Heart left ventricle (tissue), 16 donors: ENCODE measurements at regions of chr9 and their contacts with region 1.

Region 1: DNA sequence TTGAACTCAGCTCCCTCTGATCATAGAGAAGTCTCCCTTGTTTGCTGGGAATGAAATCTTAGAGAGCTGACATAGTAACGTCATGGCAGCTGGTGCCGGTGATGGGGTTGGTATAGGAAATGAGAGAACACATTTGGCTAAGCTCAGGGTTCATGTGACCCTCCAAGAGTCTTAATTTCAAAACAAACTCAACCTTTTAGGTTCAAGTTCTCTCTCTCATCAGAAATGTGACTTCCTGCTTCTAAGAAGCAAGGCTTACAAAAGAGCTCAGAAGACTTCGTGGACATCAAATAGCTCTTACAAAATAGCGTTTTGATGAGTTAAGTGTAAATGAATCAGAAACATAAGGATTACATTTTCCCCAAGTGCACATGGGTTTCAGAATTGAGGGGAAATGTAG is 97.3 kb downstream of the PAPPA start:
- DNase-seq: no peak
- ATAC-seq: no peak
- H3K4me3 ChIP-seq: no peak overlapping the region
- H3K27ac ChIP-seq: no peak overlapping the region
- H3K4me1 ChIP-seq: no peaks in the 10 kb centered on the region
- H3K27me3 ChIP-seq: no peaks in the 10 kb centered on the region
- CTCF ChIP-seq: no peak
- POLR2A ChIP-seq: no peak

Region 2: DNA sequence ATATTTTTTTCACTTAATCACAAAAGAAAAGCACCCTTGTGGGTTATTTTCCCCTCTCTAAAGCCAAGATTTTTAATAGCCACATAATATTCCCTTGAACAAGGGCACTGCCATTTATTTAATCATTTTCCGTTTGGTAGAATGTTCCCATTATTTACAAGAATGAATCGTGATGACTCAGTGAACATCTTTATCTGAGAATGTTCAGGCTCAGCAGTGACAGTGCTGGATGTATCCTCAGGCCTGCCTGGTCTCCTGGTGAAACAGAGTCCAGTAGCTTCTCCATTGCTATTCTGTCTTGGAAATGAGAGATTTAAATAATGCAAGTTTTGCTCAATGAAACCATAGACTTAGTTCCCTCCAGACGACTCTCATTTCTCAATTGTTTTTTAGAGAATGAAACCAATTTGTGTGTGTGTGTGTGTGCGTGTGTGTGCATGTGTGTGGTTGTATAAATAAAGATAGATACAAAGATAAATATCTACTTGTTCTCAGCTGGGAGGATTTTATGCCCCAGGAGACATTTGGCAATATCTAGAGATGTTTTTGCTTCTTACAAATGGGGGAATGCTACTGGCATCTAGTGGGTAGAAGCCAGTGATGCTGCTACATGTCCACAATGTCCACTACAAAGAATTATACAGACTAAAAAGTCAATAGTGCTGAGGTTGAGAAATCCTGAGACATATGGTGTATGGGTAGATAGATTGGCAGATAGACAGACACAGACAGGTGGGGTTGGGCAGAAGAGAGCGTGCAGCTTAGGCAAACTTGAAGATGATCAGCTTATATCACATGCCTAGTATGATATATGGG is 42.3 kb before region 1 on chr9:
- intact Hi-C with region 1: loop called in 1 of 10 experiments (anchors 10 kb)
- DNase-seq: no peak
- ATAC-seq: no peak
- H3K4me3 ChIP-seq: no peak overlapping the region
- H3K27ac ChIP-seq: no peak overlapping the region
- H3K4me1 ChIP-seq: no peaks in the 10 kb centered on the region
- H3K27me3 ChIP-seq: no peaks in the 10 kb centered on the region
- CTCF ChIP-seq: no peak
- POLR2A ChIP-seq: no peak